H1 (cell line): ENCODE measurements at regions of chr3 and their contacts with region 1.

Region 1: DNA sequence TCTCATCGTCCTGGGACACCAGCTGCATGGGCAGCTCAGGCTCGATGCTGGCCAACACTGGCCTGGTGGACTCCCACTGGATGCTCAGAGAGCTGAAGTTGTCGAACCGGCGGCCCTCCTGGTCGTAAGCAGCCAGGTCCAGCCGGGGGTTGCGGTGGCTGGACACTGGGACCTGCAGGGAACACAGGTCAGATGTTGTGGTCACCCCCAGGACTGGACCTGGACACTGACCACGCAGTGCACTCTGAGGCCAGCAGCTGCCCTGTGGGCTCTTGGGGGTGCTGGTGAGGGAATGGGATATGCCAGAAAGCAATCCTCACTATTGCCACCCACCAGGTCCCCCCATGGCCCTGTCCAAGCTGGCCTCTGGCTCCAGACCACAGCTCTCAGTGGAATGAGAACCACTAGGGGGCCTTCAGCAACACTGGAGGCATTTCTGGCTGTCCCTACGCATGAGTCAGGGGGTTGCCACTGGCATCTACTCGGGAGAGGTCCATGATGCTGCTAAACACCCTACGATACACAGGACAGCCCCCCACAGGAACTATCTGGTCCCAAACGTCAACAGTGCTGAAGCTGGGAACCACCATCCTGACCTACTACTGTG is 66.1 kb downstream of the NUP210 start:
- DNase-seq: no peak
- H3K4me3 ChIP-seq: no peak overlapping the region
- H3K27ac ChIP-seq: no peak overlapping the region; the same call in 1 of the 2 replicates
- H3K4me1 ChIP-seq: peaks cover 4 to 12% (median 6%) of the 10 kb centered on the region in 4 experiments
- H3K27me3 ChIP-seq: no peaks in the 10 kb centered on the region
- CTCF ChIP-seq: peak; percentile 18 to 48 (median 30); a peak in 3 of 4 replicates
- EP300 ChIP-seq: no peak
- POLR2A ChIP-seq: no peak
- RAD21 ChIP-seq: no peak; a peak in 1 of 4 replicates

Region 2: DNA sequence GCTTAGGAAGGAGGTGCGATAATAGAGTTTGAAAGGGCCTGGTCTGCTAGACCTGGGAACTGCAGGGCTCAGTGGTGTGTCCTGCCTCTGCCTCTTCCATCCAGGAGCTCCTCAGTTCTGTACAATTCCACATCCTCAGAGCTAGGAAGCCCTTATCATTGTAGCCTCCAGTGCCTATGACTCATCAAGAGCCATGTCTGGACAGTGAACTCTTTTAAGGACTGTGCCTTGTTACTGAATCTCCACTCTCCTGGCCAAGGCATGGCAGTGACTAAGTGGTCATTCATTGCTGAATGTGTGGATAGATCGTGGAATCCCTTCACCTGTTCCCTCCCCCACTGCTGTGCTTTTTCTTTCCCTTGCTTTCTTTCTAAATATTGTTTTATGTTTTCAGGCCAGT is 1198.2 kb before region 1 on chr3:
- CTCF ChIA-PET with region 1: no interaction called
- POLR2A ChIA-PET with region 1: no interaction called
- DNase-seq: no peak
- H3K4me3 ChIP-seq: no peak overlapping the region
- H3K27ac ChIP-seq: no peak overlapping the region
- H3K4me1 ChIP-seq: peaks cover 4 to 15% (median 13%) of the 10 kb centered on the region in 4 experiments; a peak in 6 of 7 replicates
- H3K27me3 ChIP-seq: no peaks in the 10 kb centered on the region
- CTCF ChIP-seq: no peak
- EP300 ChIP-seq: no peak
- POLR2A ChIP-seq: no peak
- RAD21 ChIP-seq: no peak

Region 3: GRCh38 chr3:13339833-13340232 is 14.2 kb before region 1 on chr3:
- CTCF ChIA-PET with region 1: interaction called, 22 read pairs
- POLR2A ChIA-PET with region 1: interaction called, 5 read pairs
- DNase-seq: no peak
- H3K4me3 ChIP-seq: no peak overlapping the region
- H3K27ac ChIP-seq: no peak overlapping the region
- H3K4me1 ChIP-seq: peaks cover 0 to 4% (median 2%) of the 10 kb centered on the region in 4 experiments; a peak in 4 of 7 replicates
- H3K27me3 ChIP-seq: no peaks in the 10 kb centered on the region
- CTCF ChIP-seq: no peak
- EP300 ChIP-seq: no peak
- POLR2A ChIP-seq: no peak
- RAD21 ChIP-seq: no peak

Region 4: DNA sequence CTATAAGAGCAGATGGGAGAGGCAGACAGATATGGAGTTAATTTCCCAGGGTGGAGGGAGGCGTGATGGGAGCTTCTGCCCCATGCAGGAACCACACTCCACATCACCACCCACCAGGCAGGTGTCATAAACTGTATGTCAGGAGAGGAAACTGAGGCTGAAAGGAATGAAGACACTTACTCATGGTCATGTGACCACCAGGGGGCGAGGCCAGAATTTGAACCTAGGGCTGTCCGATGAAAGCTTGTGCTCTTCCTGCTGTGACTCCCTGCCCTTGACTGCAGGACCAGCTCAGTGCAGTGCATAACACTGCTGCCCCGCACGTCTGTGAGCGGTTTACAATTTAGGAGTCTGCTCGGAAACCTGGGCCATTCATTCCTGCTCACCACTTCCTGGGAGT is 37.3 kb after region 1 on chr3:
- CTCF ChIA-PET with region 1: interaction called, 10 read pairs
- POLR2A ChIA-PET with region 1: no interaction called
- DNase-seq: no peak
- H3K4me3 ChIP-seq: no peak overlapping the region
- H3K27ac ChIP-seq: no peak overlapping the region
- H3K4me1 ChIP-seq: 0 out of 7 replicates have a peak, but pooled peaks cover 0 to 8% (median 0%) of the 10 kb centered on the region in 4 experiments
- H3K27me3 ChIP-seq: no peaks in the 10 kb centered on the region
- CTCF ChIP-seq: peak in 2 of 3 experiments; percentile 6 to 41; a peak in 3 of 4 replicates
- EP300 ChIP-seq: no peak
- POLR2A ChIP-seq: no peak
- RAD21 ChIP-seq: peak in 1 of 2 experiments; percentile 17; a peak in 1 of 4 replicates

Region 5: GRCh38 chr3:13427662-13428603 is 73.9 kb after region 1 on chr3:
- CTCF ChIA-PET with region 1: no interaction called
- POLR2A ChIA-PET with region 1: no interaction called
- DNase-seq: no peak
- H3K4me3 ChIP-seq: no peak overlapping the region
- H3K27ac ChIP-seq: no peak overlapping the region
- H3K4me1 ChIP-seq: no peaks in the 10 kb centered on the region
- H3K27me3 ChIP-seq: no peaks in the 10 kb centered on the region
- CTCF ChIP-seq: no peak
- EP300 ChIP-seq: no peak
- POLR2A ChIP-seq: no peak
- RAD21 ChIP-seq: no peak